Activated CD8-positive, alpha-beta T cell treated with anti-CD3 and anti-CD28 coated beads for 36 hours (primary cell): ENCODE measurements at regions of chr11 and their contacts with region 1.

Region 1: GRCh38 chr11:35822815-35823495 is 120.9 kb upstream of the LDLRAD3 start:
- DNase-seq: no peak
- ATAC-seq: no peak
- H3K4me3 Mint-ChIP-seq: no peak overlapping the region
- H3K27ac Mint-ChIP-seq: no peak overlapping the region
- H3K4me1 Mint-ChIP-seq: peaks cover 9% of the 10 kb centered on the region
- H3K27me3 Mint-ChIP-seq: no peaks in the 10 kb centered on the region
- CTCF ChIP-seq: no peak

Region 2: DNA sequence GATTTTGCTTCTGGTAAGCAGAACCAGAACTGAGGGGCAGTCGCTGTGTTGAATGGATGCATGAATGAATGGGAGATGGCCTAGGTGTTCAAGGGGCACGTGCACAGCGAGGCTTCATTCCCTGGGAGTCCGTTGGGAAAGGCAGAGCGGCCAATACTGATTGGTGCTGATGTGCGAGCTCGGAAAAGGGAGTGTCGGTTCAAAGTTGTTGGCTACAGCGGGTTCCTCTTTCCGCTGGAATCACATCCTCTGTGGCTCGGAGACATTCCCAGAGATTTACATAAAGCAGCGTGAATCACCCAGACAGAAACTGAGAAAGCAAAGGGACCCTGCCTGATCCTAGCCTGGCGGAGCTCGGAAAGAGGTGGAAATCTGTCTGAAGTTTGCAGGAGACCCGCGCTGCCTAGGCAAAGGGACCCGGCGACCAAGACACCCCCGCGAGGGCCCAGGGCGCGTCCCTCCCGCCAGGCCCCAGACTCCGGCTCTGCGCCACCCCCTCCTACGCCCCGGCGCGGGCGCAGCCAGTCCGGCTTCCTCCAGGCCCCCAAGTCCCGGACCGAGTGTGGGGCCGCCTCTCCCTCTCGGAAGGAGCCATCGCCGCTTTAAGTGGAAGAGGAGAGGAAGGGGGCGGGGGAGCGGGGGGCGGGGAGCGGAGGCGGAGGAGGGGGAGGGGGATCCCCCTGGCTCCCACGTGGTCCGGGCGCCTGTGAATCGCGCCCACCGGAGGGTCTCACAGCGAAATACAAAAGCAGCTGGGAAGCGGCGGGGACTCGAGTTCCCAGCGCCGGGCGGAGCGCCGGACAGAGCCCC is 205.1 kb before region 1 on chr11 and contains the start of gene FJX1:
- CTCF ChIA-PET with region 1: interaction called, 22 read pairs
- POLR2A ChIA-PET with region 1: no interaction called
- intact Hi-C with region 1: loop called (anchors 2 kb)
- DNase-seq: peak; percentile 34
- ATAC-seq: peak; percentile 19
- H3K4me3 Mint-ChIP-seq: peak within 1 kb of the TSS; percentile 66
- H3K27ac Mint-ChIP-seq: no peak within 1 kb of the TSS
- H3K4me1 Mint-ChIP-seq: peaks cover 8% of the 10 kb centered on the region
- H3K27me3 Mint-ChIP-seq: peaks cover 49% of the 10 kb centered on the region
- CTCF ChIP-seq: no peak
- total RNA-seq, gene FJX1: 1.4 to 2.1 TPM

Region 3: DNA sequence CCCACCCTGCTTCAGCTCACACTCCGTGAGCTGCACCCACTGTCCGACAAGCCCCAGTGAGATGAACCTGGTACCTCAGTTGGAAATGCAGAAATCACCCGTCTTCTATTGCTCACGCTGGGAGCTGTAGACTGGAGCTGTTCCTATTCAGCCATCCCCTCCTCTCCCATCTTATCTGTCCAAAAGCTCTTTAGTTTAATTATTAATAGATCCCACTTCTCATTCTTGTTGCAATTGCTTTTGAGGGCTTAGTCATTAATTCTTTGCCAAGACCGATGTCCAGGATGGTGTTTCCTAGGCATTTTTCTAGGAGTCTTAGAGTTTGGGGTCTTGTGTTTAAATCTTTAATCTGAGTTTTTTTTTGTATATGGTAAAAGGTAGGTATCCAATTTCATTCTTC is 43.5 kb before region 1 on chr11:
- CTCF ChIA-PET with region 1: interaction called, 12 read pairs
- POLR2A ChIA-PET with region 1: no interaction called
- intact Hi-C with region 1: no loop called
- DNase-seq: no peak
- ATAC-seq: no peak
- H3K4me3 Mint-ChIP-seq: no peak overlapping the region
- H3K27ac Mint-ChIP-seq: no peak overlapping the region
- H3K4me1 Mint-ChIP-seq: peaks cover 35% of the 10 kb centered on the region
- H3K27me3 Mint-ChIP-seq: no peaks in the 10 kb centered on the region
- CTCF ChIP-seq: no peak

Region 4: GRCh38 chr11:35811775-35812174 is 11.2 kb before region 1 on chr11:
- CTCF ChIA-PET with region 1: interaction called, 62 read pairs
- POLR2A ChIA-PET with region 1: no interaction called
- intact Hi-C with region 1: no loop called
- DNase-seq: no peak
- ATAC-seq: no peak
- H3K4me3 Mint-ChIP-seq: no peak overlapping the region
- H3K27ac Mint-ChIP-seq: no peak overlapping the region
- H3K4me1 Mint-ChIP-seq: no peaks in the 10 kb centered on the region
- H3K27me3 Mint-ChIP-seq: no peaks in the 10 kb centered on the region
- CTCF ChIP-seq: no peak

Region 5: DNA sequence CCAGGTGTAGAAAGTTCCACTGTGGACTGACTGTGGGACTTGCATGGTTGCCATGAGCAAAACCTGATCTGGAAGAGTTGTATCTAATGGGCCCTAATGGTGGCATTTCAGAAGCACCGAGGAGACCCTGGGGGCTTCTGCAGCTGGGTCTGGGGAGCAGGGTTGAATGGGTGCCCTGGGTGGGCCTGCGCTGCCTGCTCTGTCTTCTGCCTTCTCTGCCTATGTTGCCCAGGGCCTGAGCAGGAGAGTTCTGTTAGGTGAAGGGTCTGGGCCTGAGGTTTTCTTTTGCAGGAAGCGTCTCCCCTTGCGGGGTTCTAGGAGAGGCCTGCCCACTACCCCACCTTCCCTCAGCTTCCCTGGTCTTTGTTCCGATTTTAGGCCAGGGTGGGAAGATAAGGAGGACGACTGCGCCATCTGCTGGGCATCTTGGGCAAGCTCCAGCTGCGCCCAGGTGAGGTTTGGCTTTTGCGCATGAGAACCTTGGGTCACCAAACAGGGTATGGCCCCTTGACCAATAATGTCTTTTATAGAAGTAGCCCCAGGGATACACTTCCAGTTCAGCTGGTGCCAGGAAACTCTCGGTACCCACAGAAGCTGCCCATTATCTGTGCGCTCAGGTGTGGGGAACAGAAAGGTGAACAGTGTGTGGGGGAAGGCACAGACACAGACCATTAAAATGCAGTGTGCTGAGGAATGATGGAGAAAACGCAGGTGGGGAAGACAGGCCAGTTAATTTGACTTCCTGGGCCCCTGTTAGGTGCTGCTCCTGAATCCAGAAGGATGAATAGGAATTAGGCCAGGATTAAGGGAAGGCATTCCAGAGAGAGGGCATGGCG is 443.1 kb after region 1 on chr11:
- CTCF ChIA-PET with region 1: interaction called, 19 read pairs
- POLR2A ChIA-PET with region 1: no interaction called
- intact Hi-C with region 1: loop called (anchors 5 kb)
- DNase-seq: peak; percentile 66
- ATAC-seq: peak; percentile 77
- H3K4me3 Mint-ChIP-seq: no peak overlapping the region
- H3K27ac Mint-ChIP-seq: no peak overlapping the region
- H3K4me1 Mint-ChIP-seq: no peaks in the 10 kb centered on the region
- H3K27me3 Mint-ChIP-seq: peaks cover 2% of the 10 kb centered on the region
- CTCF ChIP-seq: peak; percentile 91